HepG2 (cell line): ENCODE measurements at regions of chr17 and their contacts with region 1.

Region 1: GRCh38 chr17:27519550-27519949 is 63.3 kb downstream of the KSR1 start:
- DNase-seq: no peak
- ATAC-seq: no peak
- H3K4me3 ChIP-seq: no peak overlapping the region
- H3K27ac ChIP-seq: no peak overlapping the region
- H3K4me1 ChIP-seq: peaks cover 61% of the 10 kb centered on the region
- H3K27me3 ChIP-seq: no peaks in the 10 kb centered on the region
- CTCF ChIP-seq: no peak
- EP300 ChIP-seq: no peak
- POLR2A ChIP-seq: no peak
- RAD21 ChIP-seq: no peak

Region 2: GRCh38 chr17:27544350-27545131 is 25.0 kb after region 1 on chr17:
- CTCF ChIA-PET with region 1: no interaction called
- POLR2A ChIA-PET with region 1: interaction called, 10 read pairs
- in situ Hi-C with region 1: no loop called
- intact Hi-C with region 1: no loop called
- DNase-seq: no peak
- ATAC-seq: no peak
- H3K4me3 ChIP-seq: no peak overlapping the region
- H3K27ac ChIP-seq: no peak overlapping the region
- H3K4me1 ChIP-seq: peaks cover 70% of the 10 kb centered on the region
- H3K27me3 ChIP-seq: no peaks in the 10 kb centered on the region
- CTCF ChIP-seq: no peak
- EP300 ChIP-seq: no peak
- POLR2A ChIP-seq: no peak
- RAD21 ChIP-seq: no peak

Region 3: DNA sequence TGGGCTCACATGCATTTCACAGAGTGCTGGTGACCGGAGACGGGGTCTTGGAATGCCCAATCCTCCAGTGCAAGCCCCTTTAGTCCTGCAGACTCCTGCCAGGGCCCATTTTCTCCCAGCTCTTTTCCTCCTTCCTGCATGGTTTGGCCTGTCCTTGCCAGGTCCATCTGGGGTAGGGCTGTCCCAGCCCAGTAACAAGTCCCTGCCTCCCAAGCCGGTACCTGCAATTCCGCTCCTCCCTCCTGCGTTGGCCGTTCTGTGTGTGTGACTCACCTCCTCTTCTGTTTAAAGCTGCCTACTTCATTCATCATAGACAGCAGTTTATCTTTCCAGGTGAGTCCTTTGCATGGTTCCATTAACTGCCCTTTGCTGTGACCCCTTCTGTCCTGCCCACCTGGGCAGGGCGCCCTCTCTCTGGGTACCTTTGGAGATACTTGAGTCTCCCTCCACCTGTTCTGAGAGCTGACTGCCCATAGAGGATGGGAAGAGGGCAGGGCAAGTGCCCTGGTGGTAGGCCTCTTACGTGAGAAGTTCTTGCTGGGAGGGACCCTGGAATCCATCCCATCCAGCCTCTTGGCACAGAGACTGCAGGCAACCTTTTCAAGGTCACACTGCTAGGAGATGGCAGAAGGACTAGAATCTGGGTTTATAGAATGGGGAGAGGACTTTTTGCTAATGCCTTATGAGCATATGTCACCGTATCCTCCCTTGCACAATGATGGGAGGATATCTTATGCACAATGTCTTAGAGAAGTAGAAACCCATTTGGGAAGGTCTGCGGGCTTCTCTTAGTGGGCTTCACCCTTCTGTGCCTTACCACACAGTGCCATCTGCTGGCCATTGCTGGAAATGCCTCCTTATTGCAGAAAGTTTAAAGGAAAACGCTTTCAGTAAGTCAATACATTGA is 81.8 kb after region 1 on chr17:
- CTCF ChIA-PET with region 1: no interaction called
- POLR2A ChIA-PET with region 1: no interaction called
- in situ Hi-C with region 1: no loop called
- intact Hi-C with region 1: no loop called
- DNase-seq: peak; percentile 56
- ATAC-seq: peak; percentile 17; the same call in 2 of the 3 replicates
- H3K4me3 ChIP-seq: no peak overlapping the region
- H3K27ac ChIP-seq: no peak overlapping the region
- H3K4me1 ChIP-seq: no peaks in the 10 kb centered on the region
- H3K27me3 ChIP-seq: no peaks in the 10 kb centered on the region
- CTCF ChIP-seq: peak; percentile 85
- EP300 ChIP-seq: no peak
- POLR2A ChIP-seq: no peak
- RAD21 ChIP-seq: peak; percentile 67